HepG2 (cell line): ENCODE measurements at regions of chr10 and their contacts with region 1.

Region 1: DNA sequence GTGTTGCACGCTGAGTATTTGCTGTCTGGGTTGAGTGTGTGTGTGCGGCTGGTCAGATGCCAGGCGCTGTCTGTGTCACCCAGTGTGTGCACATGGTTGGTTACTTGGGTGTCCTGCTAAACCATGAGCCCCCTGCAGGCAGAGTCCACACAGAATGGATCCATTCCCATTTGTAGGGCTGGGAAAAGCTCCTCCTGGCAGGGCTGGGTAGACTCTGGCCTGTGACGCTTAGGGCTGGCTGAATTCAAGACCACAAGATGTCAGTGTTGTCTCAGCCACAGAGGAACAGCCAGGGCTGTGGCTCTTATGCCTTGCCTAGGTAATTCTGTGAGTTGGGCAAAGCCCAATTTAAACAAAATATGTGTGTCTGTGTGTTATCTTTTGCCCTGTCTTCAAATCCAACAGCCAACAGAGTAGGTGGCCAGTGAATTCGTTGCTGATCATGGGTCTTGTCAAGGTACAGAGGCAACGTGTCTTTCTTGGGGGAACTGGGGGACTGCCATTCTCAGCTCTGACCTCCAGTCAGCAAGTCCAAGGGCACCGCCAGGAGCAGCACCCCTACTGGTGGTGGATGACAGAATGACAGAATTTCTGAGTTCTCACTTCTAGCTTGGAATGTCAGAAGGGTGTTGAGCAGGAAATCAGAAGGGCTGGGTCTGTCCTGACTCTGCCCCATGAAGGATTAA is 285.1 kb downstream of the CCSER2 start:
- DNase-seq: peak; percentile 77
- ATAC-seq: peak; percentile 100
- H3K4me3 ChIP-seq: no peak overlapping the region
- H3K27ac ChIP-seq: no peak overlapping the region
- H3K4me1 ChIP-seq: no peaks in the 10 kb centered on the region
- H3K27me3 ChIP-seq: no peaks in the 10 kb centered on the region
- CTCF ChIP-seq: peak; percentile 87
- EP300 ChIP-seq: no peak
- POLR2A ChIP-seq: no peak
- RAD21 ChIP-seq: peak; percentile 83

Region 2: DNA sequence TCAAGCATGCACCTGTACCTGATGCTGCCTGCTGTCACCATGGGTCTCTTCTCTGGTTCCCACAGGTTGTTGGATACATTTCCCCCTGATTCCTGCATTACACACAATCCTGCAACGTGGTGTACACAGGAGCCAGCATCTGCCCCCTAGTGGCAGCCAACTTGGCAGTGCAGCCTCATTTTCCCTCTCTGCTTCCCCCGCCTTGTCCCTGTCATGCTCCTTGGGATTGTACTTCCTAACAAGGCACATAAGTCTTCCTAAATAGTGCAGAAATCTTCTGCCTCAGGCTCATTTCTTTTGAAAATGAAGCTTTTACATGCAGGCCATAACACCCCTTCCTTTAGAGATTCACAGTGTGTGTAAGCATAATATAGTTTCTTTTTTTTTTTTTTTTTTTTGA is 102.4 kb after region 1 on chr10:
- CTCF ChIA-PET with region 1: interaction called, 3 read pairs
- POLR2A ChIA-PET with region 1: no interaction called
- in situ Hi-C with region 1: no loop called
- intact Hi-C with region 1: loop called (anchors 1 kb)
- DNase-seq: peak; percentile 41
- ATAC-seq: peak; percentile 94
- H3K4me3 ChIP-seq: no peak overlapping the region
- H3K27ac ChIP-seq: no peak overlapping the region
- H3K4me1 ChIP-seq: no peaks in the 10 kb centered on the region
- H3K27me3 ChIP-seq: no peaks in the 10 kb centered on the region
- CTCF ChIP-seq: peak; percentile 70
- EP300 ChIP-seq: no peak
- POLR2A ChIP-seq: no peak
- RAD21 ChIP-seq: no peak

Region 3: GRCh38 chr10:84743483-84743882 is 130.0 kb after region 1 on chr10:
- CTCF ChIA-PET with region 1: interaction called, 17 read pairs
- POLR2A ChIA-PET with region 1: no interaction called
- in situ Hi-C with region 1: loop called (anchors 5 kb)
- intact Hi-C with region 1: loop called (anchors 1 kb)
- DNase-seq: peak; percentile 7
- ATAC-seq: peak; percentile 62
- H3K4me3 ChIP-seq: no peak overlapping the region
- H3K27ac ChIP-seq: no peak overlapping the region
- H3K4me1 ChIP-seq: no peaks in the 10 kb centered on the region
- H3K27me3 ChIP-seq: no peaks in the 10 kb centered on the region
- CTCF ChIP-seq: peak; percentile 53
- EP300 ChIP-seq: no peak
- POLR2A ChIP-seq: no peak
- RAD21 ChIP-seq: no peak; the same call in 1 of the 2 replicates

Region 4: DNA sequence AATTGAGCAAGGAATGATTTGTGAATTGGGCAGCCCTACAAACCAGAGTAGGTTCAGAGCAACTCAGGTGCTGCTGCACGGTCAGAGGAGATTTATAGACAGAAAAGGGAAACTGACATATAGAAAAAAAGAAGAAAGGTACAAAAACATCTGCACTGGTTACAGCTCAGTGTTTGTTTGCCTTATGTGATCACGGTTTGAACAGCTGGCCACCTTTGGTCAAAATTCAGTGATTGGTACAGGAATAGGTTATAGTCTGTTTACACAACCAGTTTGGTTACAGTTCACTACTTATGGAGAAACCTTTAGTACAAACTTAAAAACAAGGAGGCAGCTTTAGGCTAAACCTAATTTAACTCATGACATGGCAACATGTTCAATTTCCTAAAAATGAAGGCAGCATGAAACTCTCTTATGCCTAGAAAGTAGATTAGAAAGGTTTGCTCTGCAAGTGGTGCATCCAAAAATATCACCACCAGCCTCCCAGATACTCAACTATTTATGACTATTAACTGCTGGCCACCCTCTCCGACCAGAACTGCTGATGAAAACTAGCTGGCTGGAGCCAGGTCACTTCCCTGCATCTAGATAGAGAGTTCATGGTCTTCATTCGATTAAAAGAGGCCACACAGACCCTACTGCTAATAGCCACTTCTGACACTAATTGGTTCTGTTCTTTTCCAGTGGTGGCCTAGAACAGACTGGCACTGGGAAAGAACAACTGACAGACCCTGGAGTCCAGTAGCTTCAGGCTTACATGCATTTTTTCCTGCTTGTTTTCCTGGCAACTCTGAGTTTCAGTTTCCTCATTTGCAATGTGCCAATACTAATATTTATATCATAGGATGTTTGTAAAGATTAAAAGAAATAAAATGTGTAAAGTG is 262.9 kb after region 1 on chr10:
- CTCF ChIA-PET with region 1: no interaction called
- POLR2A ChIA-PET with region 1: no interaction called
- in situ Hi-C with region 1: no loop called
- intact Hi-C with region 1: no loop called
- DNase-seq: peak; percentile 51
- ATAC-seq: peak; percentile 94
- H3K4me3 ChIP-seq: no peak overlapping the region; a peak in 1 of 6 replicates
- H3K27ac ChIP-seq: peak overlapping the region; percentile 30
- H3K4me1 ChIP-seq: peaks cover 26% of the 10 kb centered on the region
- H3K27me3 ChIP-seq: no peaks in the 10 kb centered on the region
- CTCF ChIP-seq: no peak
- EP300 ChIP-seq: peak in 1 of 2 experiments; percentile 45; a peak in 1 of 4 replicates
- POLR2A ChIP-seq: no peak
- RAD21 ChIP-seq: no peak